Ascending aorta (tissue), 2 donors: ENCODE measurements at regions of chr19 and their contacts with region 1.

Region 1: GRCh38 chr19:51681321-51682168 is 11.6 kb upstream of the SPACA6 start:
- DNase-seq: no peak
- H3K4me3 ChIP-seq: no peak overlapping the region
- H3K27ac ChIP-seq: no peak overlapping the region
- H3K4me1 ChIP-seq: no peaks in the 10 kb centered on the region
- H3K27me3 ChIP-seq: no peaks in the 10 kb centered on the region
- CTCF ChIP-seq: no peak

Region 2: DNA sequence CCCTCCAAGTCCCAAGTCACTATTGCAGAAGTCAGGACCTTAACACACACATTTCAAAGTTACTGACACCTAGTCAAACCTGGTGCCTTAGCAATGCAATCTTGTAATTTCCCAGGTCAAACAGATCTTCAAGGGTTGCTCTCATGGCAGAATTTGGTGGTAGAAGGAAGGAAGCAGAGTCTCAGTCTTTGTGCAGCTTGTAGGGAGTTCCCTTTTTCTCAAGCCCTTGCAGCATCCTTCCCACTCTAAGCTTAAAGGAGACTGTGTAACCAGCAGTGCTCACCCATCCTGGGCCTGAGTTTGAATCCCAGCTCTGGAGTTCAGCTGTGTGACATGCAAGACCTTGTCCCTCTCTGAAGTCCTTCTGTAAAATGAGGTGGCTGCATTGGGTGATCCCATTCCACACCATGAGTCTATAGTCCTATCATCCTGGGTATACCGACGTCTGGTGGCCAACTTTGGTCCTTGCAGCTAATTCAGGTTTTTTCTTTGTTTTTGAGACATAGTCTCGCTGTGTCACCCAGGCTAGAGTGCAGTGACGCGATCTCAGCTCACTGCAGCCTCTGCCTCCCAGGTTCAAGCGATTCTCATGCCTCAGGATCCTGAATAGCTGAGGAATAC is 273.9 kb before region 1 on chr19:
- intact Hi-C with region 1: no loop called
- DNase-seq: no peak
- H3K4me3 ChIP-seq: no peak overlapping the region
- H3K27ac ChIP-seq: no peak overlapping the region
- H3K4me1 ChIP-seq: no peaks in the 10 kb centered on the region
- H3K27me3 ChIP-seq: no peaks in the 10 kb centered on the region
- CTCF ChIP-seq: peak in 2 of 3 experiments; percentile 23 to 32

Region 3: DNA sequence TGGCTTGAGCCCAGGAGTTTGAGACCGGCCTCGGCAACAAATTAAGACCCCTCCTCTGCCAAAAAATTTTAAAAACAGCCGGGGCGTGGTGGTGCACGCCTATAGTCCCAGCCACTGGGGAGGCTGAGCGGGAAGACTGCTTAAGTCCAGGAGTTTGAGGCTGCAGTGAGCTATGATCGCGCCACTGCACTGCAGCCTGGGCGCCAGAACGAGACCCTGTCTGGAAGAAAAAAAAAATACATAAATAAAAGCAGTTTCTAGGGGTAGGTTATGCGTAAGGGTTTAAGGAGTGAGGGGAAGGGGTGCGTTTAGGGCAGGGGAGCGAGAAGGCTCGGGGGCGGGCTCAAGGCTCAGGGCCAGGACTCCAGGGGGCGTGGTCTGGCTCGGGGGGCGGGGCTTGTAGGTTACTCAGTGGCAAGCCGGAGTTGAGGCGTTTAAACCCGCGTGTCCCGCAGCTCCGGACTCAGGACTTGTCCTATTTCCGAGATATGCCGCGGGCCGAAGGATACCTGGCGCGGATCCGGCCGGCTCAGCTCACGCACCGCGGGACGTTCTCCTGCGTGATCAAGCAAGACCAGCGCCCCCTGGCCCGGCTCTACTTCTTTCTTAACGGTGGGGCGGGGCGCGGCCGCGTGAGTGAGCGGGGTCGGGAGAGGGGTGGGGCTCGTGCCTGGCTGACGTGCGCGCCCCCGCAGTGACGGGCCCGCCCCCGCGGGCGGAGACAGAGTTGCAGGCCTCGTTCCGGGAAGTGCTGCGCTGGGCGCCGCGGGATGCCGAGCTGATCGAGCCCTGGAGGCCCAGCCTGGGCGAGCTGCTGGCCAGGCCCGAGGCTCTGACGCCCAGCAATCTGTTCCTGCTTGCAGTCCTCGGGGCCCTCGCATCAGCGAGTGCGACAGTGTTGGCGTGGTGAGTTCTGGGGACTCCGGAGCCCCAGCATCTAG is 22.3 kb after region 1 on chr19:
- intact Hi-C with region 1: no loop called
- DNase-seq: peak; percentile 90 to 99
- H3K4me3 ChIP-seq: peak overlapping the region; percentile 60 to 76
- H3K27ac ChIP-seq: peak overlapping the region; percentile 80 to 93
- H3K4me1 ChIP-seq: peaks cover 9 to 17% of the 10 kb centered on the region in 2 donors
- H3K27me3 ChIP-seq: no peaks in the 10 kb centered on the region
- CTCF ChIP-seq: peak; percentile 32 to 54 (median 44)

Region 4: DNA sequence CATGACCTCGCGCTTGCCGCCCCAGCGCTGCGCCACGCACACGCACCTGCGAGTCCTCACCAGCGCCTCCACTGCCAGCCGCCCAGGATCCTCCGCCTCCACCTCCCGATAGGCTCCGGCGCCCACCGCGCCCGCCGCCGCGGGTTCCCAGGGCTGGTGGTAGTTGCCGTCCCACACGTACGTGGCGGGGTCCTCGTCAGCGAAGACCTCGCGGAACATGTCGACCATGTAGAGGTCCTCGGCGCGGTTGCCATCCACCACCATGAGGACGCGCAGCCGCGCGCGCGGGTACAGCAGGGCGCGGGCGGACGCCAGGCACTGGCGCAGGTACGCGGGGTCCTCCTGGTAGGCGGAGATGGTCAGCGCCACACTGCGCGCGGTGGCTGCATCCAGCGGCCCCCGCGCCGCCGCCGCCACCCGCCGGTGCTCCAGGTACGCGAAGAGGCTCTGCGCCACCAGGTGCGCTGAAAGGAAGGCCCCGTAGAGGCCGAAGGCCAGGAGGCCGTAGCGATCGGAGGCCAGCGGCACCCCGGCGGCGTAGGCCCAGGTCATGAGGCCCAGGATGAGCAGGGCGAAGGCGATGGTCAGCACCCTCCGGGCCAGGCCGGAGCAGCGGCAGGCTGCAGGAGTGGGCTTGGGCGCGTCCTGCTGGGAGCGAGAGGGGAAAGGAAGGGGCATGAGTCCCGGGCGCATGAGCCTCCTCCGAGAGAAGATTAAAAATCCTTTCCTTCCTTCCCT is 37.9 kb after region 1 on chr19:
- intact Hi-C with region 1: loop called (anchors 5 kb)
- DNase-seq: no peak
- H3K4me3 ChIP-seq: peak overlapping the region; percentile 9 to 38
- H3K27ac ChIP-seq: no peak overlapping the region
- H3K4me1 ChIP-seq: peaks cover 0 to 3% of the 10 kb centered on the region in 2 donors
- H3K27me3 ChIP-seq: no peaks in the 10 kb centered on the region
- CTCF ChIP-seq: no peak